HCT116 (cell line): ENCODE measurements at regions of chr5 and their contacts with region 1.

Region 1: GRCh38 chr5:148730943-148731861 is 76.9 kb upstream of the HTR4 start:
- DNase-seq: peak; percentile 83
- ATAC-seq: peak; percentile 86
- H3K4me3 ChIP-seq: peak overlapping the region; percentile 16 to 45
- H3K27ac ChIP-seq: no peak overlapping the region
- H3K4me1 ChIP-seq: peaks cover 0 to 9% of the 10 kb centered on the region in 2 experiments; a peak in 2 of 4 replicates
- H3K27me3 ChIP-seq: peaks cover 9% of the 10 kb centered on the region; the same call in 1 of the 2 replicates
- CTCF ChIP-seq: peak; percentile 68 to 99 (median 95)
- POLR2A ChIP-seq: no peak
- RAD21 ChIP-seq: peak; percentile 97

Region 2: GRCh38 chr5:147949711-147950573 is 781.3 kb before region 1 on chr5:
- CTCF ChIA-PET with region 1: interaction called, 7 read pairs
- POLR2A ChIA-PET with region 1: no interaction called
- RAD21 ChIA-PET with region 1: interaction called in 1 of 2 experiments, 6 read pairs
- intact Hi-C with region 1: loop called (anchors 2 kb)
- DNase-seq: peak; percentile 33
- ATAC-seq: peak; percentile 87
- H3K4me3 ChIP-seq: no peak overlapping the region
- H3K27ac ChIP-seq: no peak overlapping the region
- H3K4me1 ChIP-seq: no peaks in the 10 kb centered on the region
- H3K27me3 ChIP-seq: no peaks in the 10 kb centered on the region
- CTCF ChIP-seq: peak; percentile 50 to 79 (median 77); a peak in 5 of 6 replicates
- POLR2A ChIP-seq: no peak
- RAD21 ChIP-seq: peak; percentile 78

Region 3: GRCh38 chr5:148383564-148384379 is 347.4 kb before region 1 on chr5 and contains the start of gene FBXO38:
- CTCF ChIA-PET with region 1: interaction called, 4 read pairs
- POLR2A ChIA-PET with region 1: no interaction called
- RAD21 ChIA-PET with region 1: no interaction called
- intact Hi-C with region 1: loop called (anchors 5 kb)
- DNase-seq: peak; percentile 94
- ATAC-seq: peak; percentile 96
- H3K4me3 ChIP-seq: peak within 1 kb of the TSS; percentile 85
- H3K27ac ChIP-seq: peak within 1 kb of the TSS; percentile 47
- H3K4me1 ChIP-seq: peaks cover 4 to 21% of the 10 kb centered on the region in 2 experiments; a peak in 3 of 4 replicates
- H3K27me3 ChIP-seq: no peaks in the 10 kb centered on the region
- CTCF ChIP-seq: no peak
- POLR2A ChIP-seq: peak; percentile 37
- RAD21 ChIP-seq: no peak
- total RNA-seq, gene FBXO38: 36.3 TPM

Region 4: DNA sequence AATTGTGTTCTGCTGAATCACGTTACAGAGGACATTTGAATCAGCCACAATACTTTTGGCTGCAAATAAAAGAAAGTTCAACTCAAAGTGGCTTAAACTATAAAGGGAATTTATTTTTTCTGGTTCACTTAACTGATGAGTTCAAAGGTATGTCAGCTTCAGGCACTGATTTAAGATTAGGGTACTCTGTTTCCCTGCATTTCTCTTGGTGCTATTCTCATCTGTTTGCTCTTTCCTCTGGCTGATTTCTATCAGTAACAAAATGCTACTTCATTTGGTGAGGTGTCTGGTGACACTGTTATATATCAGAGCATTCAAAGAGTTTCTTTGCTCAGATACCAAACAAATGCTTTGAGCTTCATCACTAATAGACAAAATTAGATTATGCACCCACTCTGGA is 11.0 kb before region 1 on chr5:
- CTCF ChIA-PET with region 1: interaction called, 12 read pairs
- POLR2A ChIA-PET with region 1: no interaction called
- RAD21 ChIA-PET with region 1: no interaction called
- intact Hi-C with region 1: no loop called
- DNase-seq: no peak
- ATAC-seq: no peak
- H3K4me3 ChIP-seq: no peak overlapping the region
- H3K27ac ChIP-seq: no peak overlapping the region
- H3K4me1 ChIP-seq: no peaks in the 10 kb centered on the region
- H3K27me3 ChIP-seq: peaks cover 32% of the 10 kb centered on the region
- CTCF ChIP-seq: no peak
- POLR2A ChIP-seq: no peak
- RAD21 ChIP-seq: no peak

Region 5: GRCh38 chr5:148998174-148998797 is 267.1 kb after region 1 on chr5:
- CTCF ChIA-PET with region 1: interaction called, 7 read pairs
- POLR2A ChIA-PET with region 1: no interaction called
- RAD21 ChIA-PET with region 1: no interaction called
- intact Hi-C with region 1: loop called (anchors 1 kb)
- DNase-seq: peak; percentile 63
- ATAC-seq: peak; percentile 82
- H3K4me3 ChIP-seq: no peak overlapping the region
- H3K27ac ChIP-seq: no peak overlapping the region
- H3K4me1 ChIP-seq: peaks cover 8 to 20% of the 10 kb centered on the region in 2 experiments
- H3K27me3 ChIP-seq: no peaks in the 10 kb centered on the region
- CTCF ChIP-seq: peak; percentile 63 to 81 (median 80)
- POLR2A ChIP-seq: no peak
- RAD21 ChIP-seq: peak; percentile 91

Region 6: GRCh38 chr5:149114403-149115312 is 383.5 kb after region 1 on chr5:
- CTCF ChIA-PET with region 1: interaction called, 198 read pairs
- POLR2A ChIA-PET with region 1: interaction called, 3 read pairs
- RAD21 ChIA-PET with region 1: interaction called, 6 to 10 read pairs
- intact Hi-C with region 1: loop called (anchors 1 kb)
- DNase-seq: peak; percentile 77
- ATAC-seq: peak; percentile 98
- H3K4me3 ChIP-seq: no peak overlapping the region
- H3K27ac ChIP-seq: no peak overlapping the region
- H3K4me1 ChIP-seq: peaks cover 10 to 32% of the 10 kb centered on the region in 2 experiments; a peak in 3 of 4 replicates
- H3K27me3 ChIP-seq: no peaks in the 10 kb centered on the region
- CTCF ChIP-seq: peak; percentile 81 to 89 (median 82)
- POLR2A ChIP-seq: no peak
- RAD21 ChIP-seq: peak; percentile 97

Region 7: DNA sequence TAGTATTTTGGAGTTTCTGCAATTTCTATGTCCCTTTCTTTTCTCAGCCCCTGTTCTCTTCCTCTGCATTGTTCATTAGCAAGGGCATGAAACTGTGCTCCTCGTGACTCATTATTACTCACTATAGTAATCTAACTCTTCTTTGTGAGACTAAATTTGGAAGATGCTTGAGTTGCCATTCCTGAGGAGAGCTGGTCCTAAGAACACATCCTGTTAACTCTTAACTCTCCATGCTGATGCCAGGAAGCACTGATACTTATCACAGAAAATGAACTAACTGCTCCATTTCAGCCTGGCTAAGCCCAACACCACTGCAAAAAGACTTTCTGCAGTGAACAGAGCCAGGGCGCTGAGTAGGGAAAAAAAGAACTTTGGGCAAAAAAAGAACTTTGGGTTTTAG is 830.6 kb after region 1 on chr5:
- CTCF ChIA-PET with region 1: no interaction called
- POLR2A ChIA-PET with region 1: no interaction called
- RAD21 ChIA-PET with region 1: no interaction called
- intact Hi-C with region 1: loop called (anchors 5 kb)
- DNase-seq: peak; percentile 95
- ATAC-seq: peak; percentile 79
- H3K4me3 ChIP-seq: peak overlapping the region; percentile 28 to 50
- H3K27ac ChIP-seq: peak overlapping the region; percentile 89
- H3K4me1 ChIP-seq: peaks cover 43 to 64% of the 10 kb centered on the region in 2 experiments
- H3K27me3 ChIP-seq: no peaks in the 10 kb centered on the region
- CTCF ChIP-seq: no peak
- POLR2A ChIP-seq: no peak
- RAD21 ChIP-seq: no peak